ENCODE measurements at regions of chr5 and their contacts with region 1.

Region 1: DNA sequence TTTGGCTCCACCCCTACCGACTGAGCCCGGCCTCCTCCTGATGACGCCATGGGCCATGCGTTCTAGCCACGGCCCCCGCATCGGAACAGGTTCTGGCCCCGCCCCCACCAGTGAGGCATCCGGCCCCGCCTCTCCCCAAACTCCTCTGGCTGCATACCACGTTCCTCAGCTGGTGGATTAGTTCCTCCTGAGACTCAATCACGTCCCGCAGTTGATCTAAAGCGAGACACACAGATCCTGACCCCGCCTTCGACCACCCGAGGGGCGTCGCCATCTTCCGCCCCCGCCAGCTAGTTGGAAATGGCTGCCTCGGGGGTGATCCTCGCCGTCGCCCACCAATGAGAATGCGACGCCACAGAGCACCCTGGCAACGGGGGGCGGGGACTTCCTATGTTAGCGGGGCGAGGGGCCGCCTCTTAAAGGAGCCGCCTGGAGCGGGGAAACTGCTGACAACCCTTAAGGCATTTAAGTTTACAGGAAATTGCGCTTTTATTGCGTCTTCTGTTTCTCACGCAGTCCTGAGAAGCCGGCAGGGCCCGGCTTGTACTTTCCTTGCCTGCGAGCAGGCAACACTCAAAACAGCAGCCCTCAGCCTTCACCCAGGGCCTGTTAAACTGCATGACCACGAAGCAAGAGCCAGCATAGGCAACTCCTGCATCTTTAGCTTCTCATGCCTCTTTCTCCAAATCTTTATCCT is at the start of gene SPATA24:
- DNase-seq: peak; percentile 96 to 98 (median 97)
- H3K4me3 ChIP-seq: peak within 1 kb of the TSS; percentile 57
- H3K4me3 Mint-ChIP-seq: peak within 1 kb of the TSS; percentile 85 to 98 (median 97)
- H3K27ac ChIP-seq: peak within 1 kb of the TSS; percentile 81
- H3K27ac Mint-ChIP-seq: peak within 1 kb of the TSS; percentile 93 to 100 (median 99)
- H3K4me1 ChIP-seq: peaks cover 22% of the 10 kb centered on the region
- H3K4me1 Mint-ChIP-seq: peaks cover 25 to 34% (median 30%) of the 10 kb centered on the region in 3 donors
- H3K27me3 ChIP-seq: no peaks in the 10 kb centered on the region
- H3K27me3 Mint-ChIP-seq: no peaks in the 10 kb centered on the region
- total RNA-seq, gene SPATA24: 3.6 to 3.9 TPM

Region 2: DNA sequence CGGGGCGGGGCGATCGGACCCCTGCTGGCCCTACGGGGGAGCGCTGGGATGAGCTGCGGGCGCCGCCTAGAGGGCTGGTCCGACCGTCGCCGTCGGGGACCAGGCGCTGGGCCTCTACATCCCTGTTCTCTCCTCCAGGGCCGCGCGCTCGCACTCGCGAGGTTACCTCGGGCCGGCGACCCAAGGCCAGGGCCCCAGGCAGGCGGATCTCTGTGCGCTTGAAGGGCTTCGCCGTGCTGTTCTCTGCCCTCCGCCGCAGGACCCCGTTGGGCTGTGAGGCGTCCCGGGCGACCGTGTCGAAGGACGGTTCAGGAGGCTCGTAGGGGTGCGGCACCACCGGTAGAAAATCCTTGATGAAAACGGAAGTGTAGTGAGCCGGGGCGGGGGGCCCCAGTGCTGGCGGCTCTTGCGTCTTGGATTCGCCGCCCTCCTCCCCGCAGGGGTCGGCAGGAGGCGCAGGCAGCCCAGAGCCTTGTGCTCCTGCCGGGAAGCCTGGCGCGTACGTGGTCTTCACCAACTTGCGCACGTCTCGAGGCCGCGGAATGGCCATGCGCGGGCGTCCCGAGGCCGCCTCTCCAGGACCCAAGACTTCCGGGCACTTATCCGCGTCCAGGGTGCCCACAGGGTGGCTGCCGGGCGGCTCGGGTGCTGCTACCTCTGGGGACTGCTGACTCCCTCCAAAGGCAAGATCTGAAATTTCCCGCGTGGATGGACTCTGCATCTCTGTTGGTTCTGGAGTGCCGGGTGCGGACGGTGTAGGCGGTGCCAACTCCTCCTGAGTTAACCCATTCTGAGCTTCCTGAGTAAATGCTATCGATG is 11.0 kb before region 1 on chr5:
- CTCF ChIA-PET with region 1: interaction called, 38 read pairs
- POLR2A ChIA-PET with region 1: interaction called, 9 read pairs
- DNase-seq: peak; percentile 63 to 84 (median 75)
- H3K4me3 ChIP-seq: peak overlapping the region; percentile 59
- H3K4me3 Mint-ChIP-seq: peak overlapping the region; percentile 87 to 95 (median 89)
- H3K27ac ChIP-seq: peak overlapping the region; percentile 24
- H3K27ac Mint-ChIP-seq: peak overlapping the region; percentile 61 to 92 (median 83)
- H3K4me1 ChIP-seq: peaks cover 41% of the 10 kb centered on the region
- H3K4me1 Mint-ChIP-seq: peaks cover 27 to 59% (median 37%) of the 10 kb centered on the region in 3 donors
- H3K27me3 ChIP-seq: no peaks in the 10 kb centered on the region
- H3K27me3 Mint-ChIP-seq: peaks cover 0 to 5% of the 10 kb centered on the region in 2 donors

Region 3: DNA sequence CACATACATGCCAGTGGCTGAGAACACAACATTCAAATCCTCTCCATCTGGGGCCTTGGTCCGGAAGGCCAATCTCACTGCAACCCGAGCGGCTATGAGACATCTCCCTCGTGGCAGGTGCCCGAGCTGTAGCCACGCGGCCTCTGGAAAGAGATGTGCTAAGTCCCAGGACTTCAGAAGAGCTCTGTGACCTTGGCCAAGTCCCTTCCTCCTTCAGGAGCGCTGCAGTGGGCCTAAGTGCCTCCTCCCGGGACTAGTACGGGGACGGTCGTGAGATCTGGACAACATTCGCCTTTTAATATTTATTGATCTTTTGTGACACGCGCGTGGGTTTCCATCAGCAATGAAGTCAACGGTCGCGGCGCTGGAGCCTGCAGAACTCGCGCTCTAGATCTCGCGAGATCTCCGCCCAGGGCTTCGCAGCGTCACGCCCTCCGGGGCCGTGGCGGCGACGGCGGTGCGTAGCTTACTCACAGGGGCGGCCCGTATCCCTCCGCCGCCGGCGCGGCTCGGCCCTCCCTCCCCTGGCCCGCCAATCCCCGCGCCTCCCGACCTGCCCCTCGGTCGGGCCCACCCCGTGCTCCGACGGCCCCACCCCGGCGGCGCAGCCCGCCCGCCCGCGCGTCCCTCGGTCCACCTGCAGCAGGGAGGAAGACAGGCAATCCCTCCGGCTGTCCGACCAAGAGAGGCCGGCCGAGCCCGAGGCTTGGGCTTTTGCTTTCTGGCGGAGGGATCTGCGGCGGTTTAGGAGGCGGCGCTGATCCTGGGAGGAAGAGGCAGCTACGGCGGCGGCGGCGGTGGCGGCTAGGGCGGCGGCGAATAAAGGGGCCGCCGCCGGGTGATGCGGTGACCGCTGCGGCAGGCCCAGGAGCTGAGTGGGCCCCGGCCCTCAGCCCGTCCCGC is 157.1 kb after region 1 on chr5 and contains the start of gene UBE2D2:
- CTCF ChIA-PET with region 1: interaction called, 3 read pairs
- POLR2A ChIA-PET with region 1: interaction called, 10 read pairs
- DNase-seq: peak; percentile 97 to 98 (median 97)
- H3K4me3 ChIP-seq: peak within 1 kb of the TSS; percentile 64
- H3K4me3 Mint-ChIP-seq: peak within 1 kb of the TSS; percentile 90 to 97 (median 95)
- H3K27ac ChIP-seq: peak within 1 kb of the TSS; percentile 77
- H3K27ac Mint-ChIP-seq: peak within 1 kb of the TSS; percentile 89 to 99 (median 97)
- H3K4me1 ChIP-seq: peaks cover 40% of the 10 kb centered on the region
- H3K4me1 Mint-ChIP-seq: peaks cover 36 to 46% (median 40%) of the 10 kb centered on the region in 3 donors
- H3K27me3 ChIP-seq: no peaks in the 10 kb centered on the region
- H3K27me3 Mint-ChIP-seq: peaks cover 0 to 3% of the 10 kb centered on the region in 2 donors
- total RNA-seq, gene UBE2D2: 253 to 274 TPM